Endothelial cell of umbilical vein (primary cell): ENCODE measurements at regions of chr16 and their contacts with region 1.

Region 1: DNA sequence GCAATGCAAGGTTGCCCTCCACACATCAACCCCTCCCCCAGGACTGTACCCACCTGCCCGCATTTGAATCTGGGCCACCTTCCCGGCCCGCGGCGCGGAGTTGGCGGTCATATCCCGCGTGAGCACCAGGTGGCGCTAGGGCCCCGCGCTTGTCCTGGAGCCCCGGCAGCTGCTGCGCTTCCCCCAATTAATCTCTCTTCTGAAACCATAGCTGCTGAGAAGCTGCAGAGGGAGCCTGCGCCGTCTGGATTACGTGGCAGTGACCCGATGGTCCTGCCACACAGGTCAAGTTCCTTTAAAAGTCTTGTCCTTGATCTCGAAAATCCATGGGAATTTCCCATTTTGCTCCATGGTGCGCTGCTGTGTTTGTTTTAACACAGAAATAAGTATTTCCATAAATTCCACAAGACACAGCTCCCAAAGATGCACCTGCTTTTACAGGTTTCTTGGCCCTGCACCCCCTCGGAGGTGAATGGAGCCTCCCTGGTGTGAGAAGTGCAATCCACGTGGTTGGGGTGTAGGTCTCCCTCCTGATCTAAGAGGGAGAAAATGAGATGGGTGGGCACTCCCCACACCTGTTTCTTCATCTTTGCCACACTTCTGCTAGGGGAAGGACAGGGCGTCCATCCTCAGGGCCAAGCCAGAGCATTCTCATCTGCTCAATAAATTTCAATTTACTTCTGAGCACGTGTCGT is 22.1 kb downstream of the COX4I1 start:
- DNase-seq: peak; percentile 67
- H3K4me3 ChIP-seq: no peak overlapping the region
- H3K27ac ChIP-seq: no peak overlapping the region
- H3K4me1 ChIP-seq: no peaks in the 10 kb centered on the region
- H3K27me3 ChIP-seq: peaks cover 0 to 2% of the 10 kb centered on the region in 2 experiments
- CTCF ChIP-seq: peak; percentile 90 to 95
- POLR2A ChIP-seq: no peak

Region 2: DNA sequence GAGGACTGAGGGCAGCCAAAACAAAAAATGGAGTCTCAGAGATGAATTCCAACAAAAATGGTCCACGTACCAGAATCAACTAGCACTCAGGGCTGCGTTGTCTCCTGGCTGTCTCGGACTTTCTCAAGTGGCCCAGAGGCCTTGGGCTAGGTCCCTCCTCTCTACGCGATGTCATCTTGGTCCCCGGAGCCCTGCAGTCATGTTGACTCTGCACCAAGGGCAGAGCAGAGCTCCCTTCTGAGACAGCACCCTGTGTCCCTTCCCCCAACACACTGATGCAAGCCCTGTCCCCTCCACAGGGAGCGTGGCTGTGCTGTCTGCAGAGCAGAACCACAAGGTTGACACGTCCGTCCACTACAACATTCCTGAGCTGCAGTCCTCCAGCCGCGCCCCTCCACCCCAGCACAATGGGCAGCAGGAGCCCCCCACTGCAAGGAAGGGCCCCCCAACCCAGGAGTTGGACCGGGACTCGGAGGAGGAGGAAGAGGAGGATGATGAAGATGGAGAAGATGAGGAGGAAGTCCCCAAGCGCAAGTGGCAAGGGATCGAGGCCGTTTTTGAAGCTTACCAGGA is 153.7 kb before region 1 on chr16:
- CTCF ChIA-PET with region 1: no interaction called
- POLR2A ChIA-PET with region 1: no interaction called
- dilution Hi-C with region 1: no loop called
- intact Hi-C with region 1: no loop called
- DNase-seq: no peak
- H3K4me3 ChIP-seq: no peak overlapping the region
- H3K27ac ChIP-seq: no peak overlapping the region
- H3K4me1 ChIP-seq: no peaks in the 10 kb centered on the region
- H3K27me3 ChIP-seq: no peaks in the 10 kb centered on the region
- CTCF ChIP-seq: no peak
- POLR2A ChIP-seq: no peak

Region 3: GRCh38 chr16:85898521-85899442 is 77.2 kb after region 1 on chr16 and contains the start of gene IRF8:
- CTCF ChIA-PET with region 1: interaction called, 17 read pairs
- POLR2A ChIA-PET with region 1: no interaction called
- dilution Hi-C with region 1: no loop called
- intact Hi-C with region 1: loop called (anchors 5 kb)
- DNase-seq: peak; percentile 81
- H3K4me3 ChIP-seq: peak within 1 kb of the TSS; percentile 24 to 44 (median 38)
- H3K27ac ChIP-seq: no peak within 1 kb of the TSS
- H3K4me1 ChIP-seq: peaks cover 8% of the 10 kb centered on the region
- H3K27me3 ChIP-seq: peaks cover 56 to 62% of the 10 kb centered on the region in 2 experiments
- CTCF ChIP-seq: no peak
- POLR2A ChIP-seq: no peak
- total RNA-seq, gene IRF8: not detected in 2 replicates

Region 4: GRCh38 chr16:85995541-85996423 is 174.2 kb after region 1 on chr16:
- CTCF ChIA-PET with region 1: interaction called, 564 read pairs
- POLR2A ChIA-PET with region 1: no interaction called
- dilution Hi-C with region 1: no loop called
- intact Hi-C with region 1: no loop called
- DNase-seq: no peak
- H3K4me3 ChIP-seq: no peak overlapping the region
- H3K27ac ChIP-seq: no peak overlapping the region
- H3K4me1 ChIP-seq: no peaks in the 10 kb centered on the region
- H3K27me3 ChIP-seq: peaks cover 0 to 2% of the 10 kb centered on the region in 2 experiments
- CTCF ChIP-seq: no peak
- POLR2A ChIP-seq: no peak

Region 5: GRCh38 chr16:86016201-86016871 is 194.7 kb after region 1 on chr16:
- CTCF ChIA-PET with region 1: interaction called, 333 read pairs
- POLR2A ChIA-PET with region 1: no interaction called
- dilution Hi-C with region 1: no loop called
- intact Hi-C with region 1: loop called (anchors 1 kb)
- DNase-seq: peak; percentile 62
- H3K4me3 ChIP-seq: no peak overlapping the region
- H3K27ac ChIP-seq: no peak overlapping the region
- H3K4me1 ChIP-seq: no peaks in the 10 kb centered on the region
- H3K27me3 ChIP-seq: no peaks in the 10 kb centered on the region
- CTCF ChIP-seq: peak; percentile 57 to 72
- POLR2A ChIP-seq: no peak